Motor neuron (in vitro differentiated cells): ENCODE measurements at regions of chr11 and their contacts with region 1.

Region 1: GRCh38 chr11:8911029-8911826 is at the start of gene AKIP1:
- ATAC-seq: peak; percentile 80 to 97 (median 94)
- H3K4me3 ChIP-seq: peak within 1 kb of the TSS; percentile 47 to 89 (median 72)
- H3K27ac ChIP-seq: peak within 1 kb of the TSS; percentile 59 to 64
- H3K4me1 ChIP-seq: peaks cover 7 to 13% of the 10 kb centered on the region in 2 donors
- total RNA-seq, gene AKIP1: 22.3 to 45.6 (median 29.7) TPM

Region 2: DNA sequence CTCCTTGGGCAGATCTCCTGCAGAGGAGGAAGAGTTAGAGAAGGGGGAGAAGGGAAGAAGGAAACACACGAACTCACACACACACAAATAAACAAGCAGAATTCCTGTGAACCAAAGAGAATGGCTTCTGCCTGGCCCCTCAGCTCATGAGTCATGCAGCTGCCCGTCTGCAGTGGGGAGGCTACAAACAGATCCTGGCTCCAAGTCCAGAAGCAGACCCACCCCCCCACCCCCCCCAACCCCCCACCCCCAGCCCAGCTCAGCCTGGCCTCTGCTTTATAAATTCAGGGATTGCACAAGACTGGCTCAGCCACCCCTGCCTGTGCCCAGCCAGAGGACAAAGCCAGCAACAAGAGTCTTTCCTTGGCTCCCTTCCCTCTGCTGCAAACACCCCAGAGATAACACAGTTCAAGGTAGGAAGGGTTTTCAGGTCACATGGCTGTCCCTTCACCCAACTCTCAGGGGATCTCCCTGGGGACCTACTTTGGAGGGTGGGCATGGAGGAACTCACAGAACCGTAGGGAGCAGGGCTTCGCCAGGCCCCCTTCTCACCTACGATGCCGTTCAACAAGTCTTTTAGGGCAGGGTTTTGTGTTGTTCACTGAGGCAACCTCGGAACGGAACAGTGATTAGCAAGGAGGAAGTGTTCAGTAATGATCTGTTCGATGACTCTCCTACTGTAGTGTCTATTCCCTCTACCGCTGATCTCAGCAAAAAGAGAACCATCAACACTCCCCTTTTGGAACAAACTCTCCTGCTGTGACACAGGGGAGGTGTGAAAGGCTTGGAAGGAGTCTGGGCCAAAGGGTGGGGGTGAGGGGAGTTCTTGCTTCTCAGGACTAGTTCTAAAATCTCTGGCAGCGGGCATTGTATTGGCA is 193.1 kb before region 1 on chr11:
- in situ Hi-C with region 1: loop called in 1 of 9 experiments (anchors 25 kb)
- ATAC-seq: peak in 7 of 8 experiments; percentile 7 to 81 (median 74)
- H3K4me3 ChIP-seq: no peak overlapping the region
- H3K27ac ChIP-seq: peak overlapping the region in 1 of 2 donors; percentile 65
- H3K4me1 ChIP-seq: peaks cover 4 to 28% of the 10 kb centered on the region in 2 donors